ENCODE measurements at regions of chr2 and their contacts with region 1.

Region 1: DNA sequence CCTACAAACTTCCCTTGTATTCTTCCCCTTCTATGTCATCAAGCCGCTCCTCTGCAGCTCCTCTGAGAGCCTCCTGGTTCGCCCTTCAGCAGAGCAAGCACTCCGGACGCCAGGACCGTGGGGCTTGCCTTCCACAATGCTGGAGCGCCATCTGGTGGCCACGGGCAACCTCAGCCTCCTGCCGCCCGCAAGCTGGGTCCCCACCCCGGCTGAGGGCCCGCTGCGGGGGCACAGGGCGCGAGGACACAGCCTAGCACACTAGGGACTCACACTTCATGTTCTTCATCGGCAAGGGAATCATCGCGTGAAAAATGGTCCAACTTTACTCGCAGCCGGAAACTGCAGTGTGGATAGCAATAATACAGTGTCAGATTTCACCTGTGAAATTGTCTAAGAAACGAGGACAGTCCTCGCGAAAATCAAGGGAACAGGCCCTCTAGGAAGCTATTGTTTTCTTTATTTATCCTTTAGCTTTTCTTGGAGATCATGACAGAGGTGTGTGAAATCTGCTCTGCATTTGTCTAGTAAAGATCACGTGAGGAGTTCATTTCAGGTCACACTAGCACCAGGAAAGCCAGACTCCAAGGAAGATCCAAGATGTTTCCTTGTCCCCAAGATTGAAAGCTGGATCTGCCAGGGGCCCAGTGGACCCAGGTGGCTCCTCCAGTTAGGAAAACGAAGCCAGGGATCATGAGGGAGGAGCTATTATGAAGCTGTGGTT is 5.8 kb downstream of the PRLH start:
- DNase-seq: peak; percentile 95
- ATAC-seq: peak; percentile 99
- H3K4me3 Mint-ChIP-seq: no peak overlapping the region
- H3K27ac Mint-ChIP-seq: no peak overlapping the region
- H3K4me1 Mint-ChIP-seq: no peaks in the 10 kb centered on the region
- H3K27me3 Mint-ChIP-seq: no peaks in the 10 kb centered on the region

Region 2: GRCh38 chr2:235725016-235725489 is 1847.1 kb before region 1 on chr2:
- CTCF ChIA-PET with region 1: no interaction called
- POLR2A ChIA-PET with region 1: no interaction called
- intact Hi-C with region 1: no loop called
- DNase-seq: no peak
- ATAC-seq: no peak
- H3K4me3 Mint-ChIP-seq: no peak overlapping the region
- H3K27ac Mint-ChIP-seq: no peak overlapping the region
- H3K4me1 Mint-ChIP-seq: no peaks in the 10 kb centered on the region
- H3K27me3 Mint-ChIP-seq: peaks cover 3% of the 10 kb centered on the region

Region 3: GRCh38 chr2:237122214-237122666 is 449.9 kb before region 1 on chr2:
- CTCF ChIA-PET with region 1: interaction called, 12 read pairs
- POLR2A ChIA-PET with region 1: no interaction called
- intact Hi-C with region 1: loop called in 1 of 2 experiments (anchors 1 kb)
- DNase-seq: peak; percentile 85
- ATAC-seq: peak; percentile 98
- H3K4me3 Mint-ChIP-seq: no peak overlapping the region
- H3K27ac Mint-ChIP-seq: peak overlapping the region; percentile 79
- H3K4me1 Mint-ChIP-seq: peaks cover 3% of the 10 kb centered on the region
- H3K27me3 Mint-ChIP-seq: no peaks in the 10 kb centered on the region

Region 4: GRCh38 chr2:237421542-237422116 is 150.6 kb before region 1 on chr2:
- CTCF ChIA-PET with region 1: interaction called, 10 read pairs
- POLR2A ChIA-PET with region 1: no interaction called
- intact Hi-C with region 1: loop called (anchors 1 to 10 kb)
- DNase-seq: peak; percentile 90
- ATAC-seq: peak; percentile 95
- H3K4me3 Mint-ChIP-seq: peak overlapping the region; percentile 50
- H3K27ac Mint-ChIP-seq: peak overlapping the region; percentile 83
- H3K4me1 Mint-ChIP-seq: peaks cover 45% of the 10 kb centered on the region
- H3K27me3 Mint-ChIP-seq: peaks cover 4% of the 10 kb centered on the region

Region 5: GRCh38 chr2:237524631-237525030 is 47.5 kb before region 1 on chr2:
- CTCF ChIA-PET with region 1: interaction called, 12 read pairs
- POLR2A ChIA-PET with region 1: no interaction called
- intact Hi-C with region 1: no loop called
- DNase-seq: no peak
- ATAC-seq: no peak
- H3K4me3 Mint-ChIP-seq: no peak overlapping the region
- H3K27ac Mint-ChIP-seq: no peak overlapping the region
- H3K4me1 Mint-ChIP-seq: no peaks in the 10 kb centered on the region
- H3K27me3 Mint-ChIP-seq: no peaks in the 10 kb centered on the region

Region 6: GRCh38 chr2:237533668-237534161 is 38.5 kb before region 1 on chr2:
- CTCF ChIA-PET with region 1: interaction called, 14 read pairs
- POLR2A ChIA-PET with region 1: no interaction called
- intact Hi-C with region 1: no loop called
- DNase-seq: no peak
- ATAC-seq: no peak
- H3K4me3 Mint-ChIP-seq: no peak overlapping the region
- H3K27ac Mint-ChIP-seq: no peak overlapping the region
- H3K4me1 Mint-ChIP-seq: no peaks in the 10 kb centered on the region
- H3K27me3 Mint-ChIP-seq: no peaks in the 10 kb centered on the region

Region 7: GRCh38 chr2:237558906-237559641 is 13.1 kb before region 1 on chr2:
- CTCF ChIA-PET with region 1: interaction called, 21 read pairs
- POLR2A ChIA-PET with region 1: no interaction called
- intact Hi-C with region 1: no loop called
- DNase-seq: no peak
- ATAC-seq: no peak
- H3K4me3 Mint-ChIP-seq: no peak overlapping the region
- H3K27ac Mint-ChIP-seq: no peak overlapping the region
- H3K4me1 Mint-ChIP-seq: peaks cover 13% of the 10 kb centered on the region
- H3K27me3 Mint-ChIP-seq: peaks cover 9% of the 10 kb centered on the region

Measured in activated CD4-positive, alpha-beta T cell treated with anti-CD3 and anti-CD28 coated beads for 36 hours (primary cell).